Cardiac septum (tissue), 1 donor: ENCODE measurements at regions of chr6 and their contacts with region 1.

Region 1: DNA sequence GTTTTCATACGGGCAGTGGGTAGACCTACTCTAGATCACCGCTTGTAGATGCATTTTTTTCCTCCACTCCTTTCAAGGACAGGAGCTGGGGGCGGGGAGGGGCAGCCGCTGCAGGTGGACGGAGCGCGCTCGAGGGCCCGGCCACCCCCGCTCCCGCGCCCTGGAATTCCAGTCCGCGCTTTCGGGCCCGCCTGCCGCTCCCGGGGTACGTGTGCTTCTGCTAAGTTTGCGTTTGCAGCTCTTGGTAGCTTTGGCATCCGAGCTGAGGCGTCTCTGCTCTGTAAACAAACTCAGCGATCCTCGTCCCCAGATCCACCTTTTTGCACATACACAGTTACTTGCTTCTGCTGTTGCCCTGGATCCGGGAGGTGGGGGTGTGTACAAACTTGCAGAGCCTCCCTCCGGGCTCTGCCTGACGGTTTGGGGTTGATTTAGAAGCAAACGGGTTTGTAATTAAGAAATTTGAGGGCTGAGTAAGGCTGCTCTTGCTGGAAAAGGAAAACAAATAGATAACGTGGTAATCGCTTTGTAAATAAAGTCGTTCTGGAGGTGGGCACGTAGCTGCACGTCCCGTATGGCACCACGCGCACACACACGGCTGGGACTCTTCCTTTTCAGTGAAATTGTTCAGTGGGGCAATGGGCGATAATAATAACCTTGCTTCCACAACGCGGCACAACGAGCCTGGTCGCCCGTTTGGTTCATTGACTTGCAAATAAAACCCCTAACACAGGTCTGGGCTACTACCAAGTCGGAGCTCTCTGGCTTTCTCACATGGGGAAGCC is 976 bp upstream of the CITED2 start:
- DNase-seq: peak; percentile 94

Region 2: GRCh38 chr6:139597771-139598755 is 222.6 kb after region 1 on chr6:
- intact Hi-C with region 1: loop called (anchors 2 kb)
- DNase-seq: no peak

Region 3: DNA sequence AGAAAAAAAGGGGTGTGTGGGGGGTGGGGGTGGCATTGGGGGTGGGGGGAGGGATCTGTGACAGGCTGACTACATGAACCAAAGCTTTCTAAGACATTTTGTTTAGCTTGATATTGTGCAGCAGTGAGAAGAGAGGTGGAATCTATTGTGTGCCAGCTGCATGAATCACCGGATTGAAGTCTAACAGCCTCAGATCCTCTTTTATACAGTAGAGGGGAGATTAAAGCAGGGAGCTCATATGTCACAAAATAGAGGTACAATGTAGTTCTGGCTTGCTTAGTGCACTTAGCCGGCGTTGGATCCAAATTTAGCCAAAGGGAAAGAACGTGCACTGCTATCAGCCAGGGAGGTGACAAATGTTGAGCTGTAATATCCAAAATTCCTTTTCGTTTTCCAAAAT is 403.3 kb after region 1 on chr6:
- intact Hi-C with region 1: loop called (anchors 5 kb)
- DNase-seq: no peak

Region 4: GRCh38 chr6:139981768-139982181 is 606.4 kb after region 1 on chr6:
- intact Hi-C with region 1: loop called (anchors 5 kb)
- DNase-seq: no peak

Region 5: GRCh38 chr6:140344142-140344913 is 968.9 kb after region 1 on chr6:
- intact Hi-C with region 1: loop called (anchors 10 kb)
- DNase-seq: no peak

Region 6: DNA sequence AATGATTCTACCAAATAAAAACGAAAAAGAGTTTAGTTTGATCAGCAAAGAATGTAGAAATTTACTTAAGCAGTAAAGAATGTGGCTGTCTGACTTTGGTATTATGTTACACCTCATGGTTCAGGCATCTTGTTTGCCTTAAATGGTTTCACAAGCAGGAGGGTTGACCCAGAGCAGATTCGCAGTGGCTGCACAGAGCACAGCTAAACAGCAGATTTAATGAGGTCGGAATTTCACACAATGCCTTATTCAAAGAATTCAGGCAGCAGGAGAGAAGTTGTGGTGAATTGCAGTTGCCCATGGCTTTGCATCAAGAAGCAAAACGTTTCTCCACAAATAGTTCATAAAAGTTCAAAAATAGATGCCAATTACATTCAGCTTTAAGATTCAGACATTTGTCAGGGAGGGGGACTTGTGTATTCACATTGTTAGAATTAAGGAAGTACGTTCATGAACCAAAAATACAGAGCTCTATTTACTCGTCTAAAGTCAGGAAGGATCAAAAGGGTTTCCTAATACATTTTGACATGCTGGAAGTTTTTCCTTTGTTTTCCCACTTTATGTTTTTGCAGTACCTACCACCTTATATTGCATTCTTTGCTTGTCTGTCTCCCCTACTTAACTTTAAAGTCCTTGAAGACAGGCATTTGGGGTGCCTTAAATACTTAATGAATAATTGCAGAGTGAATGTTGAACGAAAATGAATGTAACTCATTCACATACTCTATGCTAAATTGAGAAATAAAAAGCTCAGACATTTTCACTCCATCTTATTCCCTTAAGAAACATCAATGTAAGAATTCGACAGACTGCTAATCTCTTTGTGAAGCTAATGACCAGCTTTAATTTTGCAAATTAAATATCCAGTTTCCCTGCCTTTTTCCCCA is 1162.6 kb after region 1 on chr6:
- intact Hi-C with region 1: loop called (anchors 10 kb)
- DNase-seq: no peak

Region 7: DNA sequence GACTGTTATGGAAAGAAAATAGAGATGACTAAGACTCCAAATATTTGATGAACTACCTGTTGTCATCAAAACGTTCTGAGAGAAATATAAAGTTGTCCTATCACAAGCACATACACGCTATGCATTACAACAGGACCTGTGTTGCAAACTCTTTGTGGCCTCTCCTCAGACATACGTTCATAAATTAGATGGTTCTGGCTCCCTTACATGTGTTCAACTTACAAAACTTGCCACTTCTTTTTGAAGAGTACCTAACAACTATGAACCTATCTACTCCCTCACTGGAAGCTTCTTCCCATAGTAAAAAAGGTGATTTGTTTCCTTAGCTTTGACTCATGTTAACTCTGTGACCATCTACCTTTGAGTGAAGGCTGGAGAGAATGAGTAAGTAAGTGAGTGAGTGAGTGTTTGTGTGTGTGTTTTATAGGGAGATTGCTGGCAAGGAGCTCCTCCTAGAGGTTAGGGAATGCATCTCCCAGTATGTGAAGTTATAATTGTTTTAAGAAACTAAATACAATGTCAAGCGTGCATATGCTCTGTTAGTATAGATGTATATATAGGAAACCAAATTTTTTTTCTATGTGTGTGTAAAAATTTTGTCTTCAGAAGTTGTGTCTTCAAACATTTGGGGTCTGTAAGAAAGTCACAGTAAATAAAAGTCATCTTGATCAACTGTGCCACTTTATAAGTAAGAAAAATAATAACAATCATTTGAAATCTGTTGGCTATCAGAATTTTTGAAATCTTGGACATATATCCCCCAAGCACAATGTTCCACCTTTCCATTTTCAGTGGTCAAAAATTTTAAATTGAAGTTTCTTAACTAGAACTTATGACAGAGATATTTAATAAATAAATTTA is 1546.2 kb after region 1 on chr6:
- intact Hi-C with region 1: loop called (anchors 5 kb)
- DNase-seq: no peak